ENCODE measurements at regions of chr4 and their contacts with region 1.

Region 1: DNA sequence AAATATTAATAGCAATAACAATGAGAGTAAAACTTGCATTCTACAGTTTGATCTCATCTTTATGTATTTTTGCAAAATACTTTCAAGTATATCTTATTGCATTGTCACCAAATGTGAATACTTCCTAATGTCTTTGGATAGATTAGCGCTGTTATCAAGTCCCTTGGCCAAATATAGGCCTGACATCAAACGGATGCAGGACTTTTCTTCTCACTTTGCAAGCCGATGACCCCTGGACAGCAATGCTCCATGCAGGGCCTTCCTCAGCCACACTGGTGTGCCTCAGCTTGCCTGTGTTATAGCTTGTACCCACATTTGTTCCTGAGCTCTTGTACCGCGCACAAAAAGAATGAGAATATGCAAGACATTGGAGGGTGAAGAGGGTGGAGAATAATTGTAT is 18.0 kb upstream of the NMU start:
- DNase-seq: no peak
- H3K4me3 ChIP-seq: no peak overlapping the region
- H3K27ac ChIP-seq: no peak overlapping the region
- H3K4me1 ChIP-seq: no peaks in the 10 kb centered on the region
- H3K27me3 ChIP-seq: no peaks in the 10 kb centered on the region
- CTCF ChIP-seq: no peak

Region 2: DNA sequence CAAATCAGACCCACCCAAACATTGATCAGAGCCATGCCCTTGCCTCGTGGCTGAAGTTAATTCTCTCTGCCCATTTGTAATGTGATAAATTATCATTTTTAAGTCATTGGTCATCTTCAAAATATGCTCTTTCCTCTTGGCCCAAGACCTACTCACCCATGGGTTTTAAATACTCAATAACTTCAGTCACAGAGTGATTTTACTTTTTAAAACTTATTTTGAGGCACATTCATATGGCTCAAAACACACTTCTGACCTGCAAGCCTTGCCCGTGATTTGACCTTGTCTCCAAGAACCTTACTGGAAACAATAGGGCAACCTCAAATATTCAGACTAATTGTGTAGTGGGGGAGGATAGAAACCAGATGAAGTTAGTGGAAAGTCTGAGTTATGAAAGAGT is 1886.6 kb before region 1 on chr4:
- CTCF ChIA-PET with region 1: no interaction called
- POLR2A ChIA-PET with region 1: no interaction called
- intact Hi-C with region 1: no loop called
- DNase-seq: no peak
- H3K4me3 ChIP-seq: no peak overlapping the region
- H3K27ac ChIP-seq: no peak overlapping the region
- H3K4me1 ChIP-seq: no peaks in the 10 kb centered on the region
- H3K27me3 ChIP-seq: no peaks in the 10 kb centered on the region
- CTCF ChIP-seq: no peak

Region 3: DNA sequence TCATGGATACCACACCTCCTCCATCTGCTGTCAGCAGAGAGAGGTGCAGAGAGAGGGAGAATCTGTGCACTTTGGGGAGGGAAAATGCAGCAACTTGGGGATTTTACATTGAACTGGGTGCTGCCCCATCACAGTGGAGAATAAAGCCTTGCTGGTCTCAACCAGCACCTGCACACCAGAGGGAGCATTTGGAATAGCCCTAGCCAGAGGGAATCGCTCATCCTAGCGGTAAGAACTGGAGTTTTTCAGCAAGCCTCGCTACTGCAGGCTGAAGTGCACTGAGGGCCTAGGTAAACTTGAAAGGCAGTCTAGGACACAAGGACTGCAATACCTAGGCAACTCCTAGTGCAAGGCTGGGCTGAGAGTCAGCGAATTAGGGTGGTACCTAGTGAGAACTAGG is 677.4 kb before region 1 on chr4:
- CTCF ChIA-PET with region 1: no interaction called
- POLR2A ChIA-PET with region 1: no interaction called
- intact Hi-C with region 1: loop called (anchors 5 kb)
- DNase-seq: no peak
- H3K4me3 ChIP-seq: no peak overlapping the region
- H3K27ac ChIP-seq: no peak overlapping the region
- H3K4me1 ChIP-seq: no peaks in the 10 kb centered on the region
- H3K27me3 ChIP-seq: no peaks in the 10 kb centered on the region
- CTCF ChIP-seq: no peak

Measured in PC-9 (cell line).